Natural killer cell (primary cell): ENCODE measurements at regions of chr7 and their contacts with region 1.

Region 1: DNA sequence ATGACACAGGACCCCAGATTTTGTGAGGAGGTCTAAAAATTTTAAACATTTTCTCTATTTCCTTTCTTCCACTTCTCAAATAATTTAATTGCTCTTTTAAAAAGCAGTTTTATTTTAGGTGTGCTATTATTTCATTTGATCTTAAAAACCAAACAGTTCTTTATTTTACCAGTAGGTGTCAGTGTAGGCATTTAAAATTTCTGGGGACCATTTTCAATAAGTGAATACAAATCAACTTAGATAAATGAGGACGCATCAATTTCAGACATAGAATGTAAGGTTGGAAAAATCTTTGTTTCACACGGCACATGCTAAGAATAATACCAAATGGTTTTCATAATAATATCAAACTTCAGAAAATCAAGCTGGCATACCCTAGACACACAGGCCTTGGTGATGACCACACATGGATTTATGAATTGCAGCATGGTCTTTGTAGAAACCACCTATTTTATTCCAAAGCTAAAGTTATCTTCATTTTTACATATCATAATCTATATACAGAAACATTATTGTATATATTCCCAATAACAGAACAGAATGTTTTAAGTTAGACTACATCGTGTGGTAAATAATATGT is 127.6 kb upstream of the SLC26A5 start:
- DNase-seq: peak in 1 of 2 donors; percentile 52
- ATAC-seq: no peak
- H3K4me3 ChIP-seq: no peak overlapping the region
- H3K4me3 Mint-ChIP-seq: no peak overlapping the region
- H3K27ac ChIP-seq: no peak overlapping the region
- H3K27ac Mint-ChIP-seq: no peak overlapping the region
- H3K4me1 ChIP-seq: no peaks in the 10 kb centered on the region
- H3K4me1 Mint-ChIP-seq: no peaks in the 10 kb centered on the region
- H3K27me3 ChIP-seq: no peaks in the 10 kb centered on the region
- H3K27me3 Mint-ChIP-seq: peaks cover 3 to 6% of the 10 kb centered on the region in 2 donors
- CTCF ChIP-seq: peak; percentile 57

Region 2: GRCh38 chr7:103074519-103075336 is 498.8 kb before region 1 on chr7 and contains the starts of genes ARMC10 and FBXL13:
- intact Hi-C with region 1: no loop called
- DNase-seq: peak; percentile 83 to 95
- ATAC-seq: peak; percentile 83 to 92 (median 84)
- H3K4me3 ChIP-seq: peak within 1 kb of the TSS; percentile 50
- H3K4me3 Mint-ChIP-seq: peak within 1 kb of the TSS; percentile 95
- H3K27ac ChIP-seq: peak within 1 kb of the TSS; percentile 71
- H3K27ac Mint-ChIP-seq: peak within 1 kb of the TSS; percentile 78 to 89
- H3K4me1 ChIP-seq: peaks cover 13% of the 10 kb centered on the region
- H3K4me1 Mint-ChIP-seq: peaks cover 26 to 30% of the 10 kb centered on the region in 2 donors
- H3K27me3 ChIP-seq: no peaks in the 10 kb centered on the region
- H3K27me3 Mint-ChIP-seq: no peaks in the 10 kb centered on the region
- CTCF ChIP-seq: no peak
- total RNA-seq, gene ARMC10: 15.0 to 17.2 (median 15.4) TPM
- total RNA-seq, gene FBXL13: 0.70 to 0.89 (median 0.85) TPM

Region 3: DNA sequence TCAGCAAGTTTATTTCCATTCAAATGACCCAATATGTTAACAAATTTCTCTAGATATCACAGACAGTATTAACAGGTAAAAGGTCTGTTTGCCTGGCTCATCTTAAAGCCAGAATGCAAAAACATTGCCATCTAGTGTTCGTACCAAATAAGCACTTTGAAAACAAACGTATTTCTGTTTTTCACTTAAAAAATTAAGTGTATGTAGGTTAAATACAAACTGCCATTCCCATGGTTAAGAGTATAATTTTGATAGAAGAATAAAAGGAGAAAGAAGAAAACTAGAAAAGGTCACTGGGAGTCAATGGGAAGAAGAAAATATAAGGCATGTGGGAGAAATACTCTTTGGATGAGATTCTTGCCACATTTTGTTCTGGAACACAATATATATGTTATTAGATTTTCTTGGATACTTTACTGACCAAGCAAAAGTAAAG is 583.3 kb after region 1 on chr7:
- intact Hi-C with region 1: loop called (anchors 10 kb)
- DNase-seq: peak in 1 of 2 donors; percentile 15
- ATAC-seq: no peak
- H3K4me3 ChIP-seq: no peak overlapping the region
- H3K4me3 Mint-ChIP-seq: no peak overlapping the region
- H3K27ac ChIP-seq: no peak overlapping the region
- H3K27ac Mint-ChIP-seq: no peak overlapping the region
- H3K4me1 ChIP-seq: no peaks in the 10 kb centered on the region
- H3K4me1 Mint-ChIP-seq: no peaks in the 10 kb centered on the region
- H3K27me3 ChIP-seq: no peaks in the 10 kb centered on the region
- H3K27me3 Mint-ChIP-seq: no peaks in the 10 kb centered on the region
- CTCF ChIP-seq: peak; percentile 14